ENCODE measurements at regions of chr7 and their contacts with region 1.

Region 1: GRCh38 chr7:21939136-21939857 is 6.4 kb downstream of the CDCA7L start:
- DNase-seq: peak; percentile 34
- H3K4me3 Mint-ChIP-seq: peak overlapping the region; percentile 32
- H3K27ac Mint-ChIP-seq: peak overlapping the region; percentile 92
- H3K4me1 Mint-ChIP-seq: peaks cover 67% of the 10 kb centered on the region
- H3K27me3 Mint-ChIP-seq: no peaks in the 10 kb centered on the region

Region 2: GRCh38 chr7:20280475-20281351 is 1658.6 kb before region 1 on chr7:
- intact Hi-C with region 1: loop called (anchors 2 kb)
- DNase-seq: no peak
- H3K4me3 Mint-ChIP-seq: no peak overlapping the region
- H3K27ac Mint-ChIP-seq: no peak overlapping the region
- H3K4me1 Mint-ChIP-seq: no peaks in the 10 kb centered on the region
- H3K27me3 Mint-ChIP-seq: peaks cover 2% of the 10 kb centered on the region

Region 3: GRCh38 chr7:21352540-21353387 is 586.5 kb before region 1 on chr7:
- intact Hi-C with region 1: loop called (anchors 1 kb)
- DNase-seq: no peak
- H3K4me3 Mint-ChIP-seq: peak overlapping the region; percentile 67
- H3K27ac Mint-ChIP-seq: peak overlapping the region; percentile 96
- H3K4me1 Mint-ChIP-seq: peaks cover 69% of the 10 kb centered on the region
- H3K27me3 Mint-ChIP-seq: no peaks in the 10 kb centered on the region

Region 4: DNA sequence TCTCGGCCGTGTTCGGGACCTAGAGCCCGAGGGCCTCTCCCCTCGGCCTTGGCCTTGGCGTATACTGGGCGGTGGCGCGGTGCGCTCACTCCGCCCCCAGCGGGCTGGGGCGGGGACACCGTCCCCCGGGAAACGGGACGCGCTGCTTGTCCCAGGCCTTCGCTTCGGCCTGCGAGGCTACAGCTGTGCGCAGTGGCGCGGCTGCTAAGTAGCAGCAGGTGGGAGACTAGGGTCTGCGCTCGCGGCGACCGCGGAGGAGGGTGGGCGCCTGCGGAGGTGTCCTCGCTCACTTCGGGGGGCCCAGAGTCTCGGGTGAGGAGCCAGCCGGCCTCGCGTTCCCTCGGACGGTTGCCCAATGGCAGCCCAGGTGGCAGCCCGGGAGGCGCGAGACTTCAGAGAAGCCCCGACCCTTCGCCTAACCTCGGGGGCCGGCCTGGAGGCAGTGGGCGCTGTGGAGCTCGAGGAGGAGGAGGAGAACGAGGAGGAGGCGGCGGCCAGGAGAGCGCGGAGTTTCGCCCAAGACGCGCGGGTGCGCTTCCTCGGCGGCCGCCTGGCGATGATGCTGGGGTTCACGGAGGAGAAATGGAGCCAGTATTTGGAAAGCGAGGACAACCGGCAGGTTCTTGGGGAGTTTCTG is 396.3 kb before region 1 on chr7 and contains the start of gene DNAH11:
- intact Hi-C with region 1: loop called (anchors 5 kb)
- DNase-seq: peak; percentile 21
- H3K4me3 Mint-ChIP-seq: peak within 1 kb of the TSS; percentile 81
- H3K27ac Mint-ChIP-seq: peak within 1 kb of the TSS; percentile 44
- H3K4me1 Mint-ChIP-seq: peaks cover 22% of the 10 kb centered on the region
- H3K27me3 Mint-ChIP-seq: peaks cover 41% of the 10 kb centered on the region
- total RNA-seq, gene DNAH11: 1.3 and 1.7 TPM in 2 replicates

Region 5: GRCh38 chr7:22697876-22698606 is 758.7 kb after region 1 on chr7:
- intact Hi-C with region 1: loop called (anchors 2 kb)
- DNase-seq: peak; percentile 26
- H3K4me3 Mint-ChIP-seq: peak overlapping the region; percentile 57
- H3K27ac Mint-ChIP-seq: peak overlapping the region; percentile 79
- H3K4me1 Mint-ChIP-seq: peaks cover 74% of the 10 kb centered on the region
- H3K27me3 Mint-ChIP-seq: peaks cover 3% of the 10 kb centered on the region

Region 6: DNA sequence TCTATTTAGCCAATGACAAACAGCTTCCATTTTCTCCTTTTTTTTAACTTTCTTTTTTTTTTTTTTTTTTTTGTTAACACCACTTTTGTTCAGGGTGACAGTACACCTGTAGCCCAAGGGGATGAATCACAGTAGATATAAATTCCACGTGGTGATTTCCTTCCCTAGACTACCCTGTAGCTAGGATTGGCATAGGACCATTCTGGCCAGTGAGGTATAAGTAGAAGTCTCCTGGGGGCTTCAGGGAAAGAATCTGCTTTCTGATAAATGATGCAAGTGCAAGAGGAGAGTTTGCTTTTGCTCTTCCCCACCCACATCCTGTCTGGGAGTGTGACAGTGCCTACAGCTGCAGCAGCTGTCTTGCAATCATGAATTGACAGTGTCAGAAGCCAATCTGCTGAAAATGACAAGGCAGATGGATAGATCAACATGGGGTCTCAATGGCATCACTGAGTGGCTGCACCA is 946.5 kb after region 1 on chr7:
- intact Hi-C with region 1: loop called (anchors 1 kb)
- DNase-seq: peak; percentile 60
- H3K4me3 Mint-ChIP-seq: peak overlapping the region; percentile 59
- H3K27ac Mint-ChIP-seq: peak overlapping the region; percentile 93
- H3K4me1 Mint-ChIP-seq: peaks cover 41% of the 10 kb centered on the region
- H3K27me3 Mint-ChIP-seq: no peaks in the 10 kb centered on the region

Measured in activated T-helper 1 cell treated with anti-CD3 and anti-CD28 coated beads, Interleukin-12 subunit alpha, Interleukin-12 subunit beta, Interleukin-2, Interleukin-4 antibody, amounts not matched to agents 30 ng/mL and 10 ng/mL and 1 ng/mL, durations not matched to agents 14 hours and 24 hours and 36 hours (primary cell).